Left lung (tissue), 14 donors: ENCODE measurements at regions of chr20 and their contacts with region 1.

Region 1: DNA sequence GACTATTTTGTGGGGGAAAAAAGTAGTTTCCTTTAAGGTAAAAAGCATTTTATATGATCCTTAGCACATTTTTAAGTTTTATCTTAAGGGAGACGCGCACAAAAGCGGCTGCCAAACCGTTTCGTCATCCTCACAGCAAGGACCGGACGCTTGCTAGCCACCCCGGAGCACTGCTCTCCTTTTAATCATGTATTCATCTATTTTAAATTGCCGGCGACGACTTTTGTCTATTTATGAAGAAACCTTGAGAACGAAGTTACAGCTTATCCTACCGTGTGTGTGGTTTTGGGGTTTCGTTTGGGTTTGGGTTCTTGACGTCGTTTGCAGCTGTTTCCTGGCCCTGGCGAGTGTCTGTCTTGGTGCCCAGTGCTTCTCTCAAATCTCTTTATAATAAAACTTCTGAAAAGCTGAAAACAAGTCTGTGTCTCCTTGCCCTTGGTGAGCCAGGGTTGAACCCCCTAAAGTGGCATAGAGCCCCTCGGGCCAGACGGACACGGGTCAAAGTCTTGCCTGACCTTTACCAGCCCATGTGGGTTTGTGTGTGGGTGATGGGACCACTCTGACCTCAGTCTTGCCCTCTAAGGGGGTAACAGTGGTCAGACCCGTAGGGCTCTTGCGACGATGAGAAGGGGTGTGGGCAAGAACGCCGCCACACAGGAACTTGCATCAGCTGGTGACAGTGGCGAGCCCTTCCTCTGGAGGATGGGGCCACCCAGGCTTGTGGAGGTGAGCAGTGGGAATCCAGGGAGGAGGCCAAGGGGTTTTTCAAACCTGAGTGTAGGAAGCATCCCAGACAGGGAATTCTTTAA is 117.6 kb downstream of the JPH2 start:
- DNase-seq: peak in 1 of 4 donors; percentile 88
- ATAC-seq: no peak
- H3K4me3 ChIP-seq: peak overlapping the region in 1 of 2 donors; percentile 13
- H3K27ac ChIP-seq: peak overlapping the region in 1 of 2 donors; percentile 92
- H3K4me1 ChIP-seq: peaks cover 0 to 42% of the 10 kb centered on the region in 2 donors
- H3K27me3 ChIP-seq: no peaks in the 10 kb centered on the region
- CTCF ChIP-seq: no peak

Region 2: GRCh38 chr20:43840382-43841070 is 228.9 kb before region 1 on chr20:
- intact Hi-C with region 1: loop called in 1 of 2 experiments (anchors 10 kb)
- DNase-seq: no peak
- ATAC-seq: no peak
- H3K4me3 ChIP-seq: no peak overlapping the region
- H3K27ac ChIP-seq: no peak overlapping the region
- H3K4me1 ChIP-seq: peaks cover 0 to 8% of the 10 kb centered on the region in 2 donors
- H3K27me3 ChIP-seq: no peaks in the 10 kb centered on the region
- CTCF ChIP-seq: no peak

Region 3: GRCh38 chr20:44187051-44187762 is 117.8 kb after region 1 on chr20 and contains the start of gene JPH2:
- intact Hi-C with region 1: no loop called
- DNase-seq: no peak
- ATAC-seq: peak; percentile 50
- H3K4me3 ChIP-seq: peak within 1 kb of the TSS; percentile 15 to 21
- H3K27ac ChIP-seq: no peak within 1 kb of the TSS
- H3K4me1 ChIP-seq: peaks cover 9 to 15% of the 10 kb centered on the region in 2 donors
- H3K27me3 ChIP-seq: peaks cover 7 to 59% of the 10 kb centered on the region in 2 donors
- CTCF ChIP-seq: no peak
- polyA plus RNA-seq, gene JPH2: 0.83 to 1.9 (median 1.1) TPM

Region 4: GRCh38 chr20:44370639-44371220 is 301.3 kb after region 1 on chr20:
- intact Hi-C with region 1: no loop called
- DNase-seq: peak in 1 of 4 donors; percentile 41
- ATAC-seq: peak; percentile 81
- H3K4me3 ChIP-seq: no peak overlapping the region
- H3K27ac ChIP-seq: no peak overlapping the region
- H3K4me1 ChIP-seq: no peaks in the 10 kb centered on the region
- H3K27me3 ChIP-seq: no peaks in the 10 kb centered on the region
- CTCF ChIP-seq: no peak

Region 5: DNA sequence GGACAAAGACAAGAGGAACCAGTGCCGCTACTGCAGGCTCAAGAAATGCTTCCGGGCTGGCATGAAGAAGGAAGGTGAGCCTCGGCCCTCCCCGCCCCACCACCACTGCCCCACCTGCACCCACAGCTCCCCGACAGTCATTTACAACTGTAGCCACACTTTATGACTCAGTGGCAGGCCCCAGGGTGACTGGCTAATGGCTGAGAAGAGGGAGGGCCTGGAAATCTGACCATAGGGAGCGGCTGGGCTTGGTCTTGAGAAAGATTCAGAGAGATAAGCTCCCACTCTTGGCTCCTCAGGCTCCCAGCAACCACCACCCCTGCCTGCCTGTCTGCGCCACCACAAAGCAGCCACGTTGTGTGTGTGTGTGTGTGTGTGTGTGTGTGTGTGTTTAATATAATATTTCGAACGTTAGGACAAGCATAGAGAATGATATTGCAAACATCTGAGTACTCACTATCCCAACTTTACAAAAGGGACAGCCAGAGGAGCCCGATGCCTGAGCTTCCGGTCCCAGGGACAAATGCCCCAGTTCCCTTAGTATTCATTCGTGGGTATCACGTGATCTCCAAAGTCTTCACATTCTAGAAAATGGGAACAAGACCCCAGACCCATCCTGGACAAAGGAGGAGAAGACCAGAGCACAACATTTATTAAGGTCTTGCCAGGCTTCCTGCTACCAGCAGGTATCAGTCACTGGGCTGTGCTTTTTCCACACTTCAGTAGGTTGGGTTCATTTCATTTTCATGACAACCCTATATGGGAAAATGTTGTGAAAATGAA is 338.2 kb after region 1 on chr20:
- intact Hi-C with region 1: no loop called
- DNase-seq: peak in 1 of 4 donors; percentile 42
- ATAC-seq: peak; percentile 70
- H3K4me3 ChIP-seq: no peak overlapping the region
- H3K27ac ChIP-seq: no peak overlapping the region
- H3K4me1 ChIP-seq: no peaks in the 10 kb centered on the region
- H3K27me3 ChIP-seq: peaks cover 0 to 11% of the 10 kb centered on the region in 2 donors
- CTCF ChIP-seq: no peak

Region 6: GRCh38 chr20:44560229-44560628 is 490.8 kb after region 1 on chr20:
- intact Hi-C with region 1: no loop called
- DNase-seq: no peak
- ATAC-seq: no peak
- H3K4me3 ChIP-seq: no peak overlapping the region
- H3K27ac ChIP-seq: no peak overlapping the region
- H3K4me1 ChIP-seq: no peaks in the 10 kb centered on the region
- H3K27me3 ChIP-seq: no peaks in the 10 kb centered on the region
- CTCF ChIP-seq: no peak